Common myeloid progenitor, CD34-positive (primary cell): ENCODE measurements at regions of chr15 and their contacts with region 1.

Region 1: GRCh38 chr15:52256366-52256765 is 39.2 kb downstream of the MYO5C start:
- DNase-seq: peak; percentile 81 to 87 (median 84)
- H3K4me3 ChIP-seq: no peak overlapping the region
- H3K27ac ChIP-seq: no peak overlapping the region
- H3K4me1 ChIP-seq: peaks cover 0 to 11% (median 7%) of the 10 kb centered on the region in 4 experiments
- H3K27me3 ChIP-seq: no peaks in the 10 kb centered on the region

Region 2: GRCh38 chr15:51688863-51689262 is 567.5 kb before region 1 on chr15:
- CTCF ChIA-PET with region 1: no interaction called
- POLR2A ChIA-PET with region 1: no interaction called
- DNase-seq: peak in 2 of 3 donors; percentile 23 to 38
- H3K4me3 ChIP-seq: no peak overlapping the region
- H3K27ac ChIP-seq: no peak overlapping the region
- H3K4me1 ChIP-seq: no peaks in the 10 kb centered on the region
- H3K27me3 ChIP-seq: peaks cover 0 to 13% (median 2%) of the 10 kb centered on the region in 5 experiments

Region 3: DNA sequence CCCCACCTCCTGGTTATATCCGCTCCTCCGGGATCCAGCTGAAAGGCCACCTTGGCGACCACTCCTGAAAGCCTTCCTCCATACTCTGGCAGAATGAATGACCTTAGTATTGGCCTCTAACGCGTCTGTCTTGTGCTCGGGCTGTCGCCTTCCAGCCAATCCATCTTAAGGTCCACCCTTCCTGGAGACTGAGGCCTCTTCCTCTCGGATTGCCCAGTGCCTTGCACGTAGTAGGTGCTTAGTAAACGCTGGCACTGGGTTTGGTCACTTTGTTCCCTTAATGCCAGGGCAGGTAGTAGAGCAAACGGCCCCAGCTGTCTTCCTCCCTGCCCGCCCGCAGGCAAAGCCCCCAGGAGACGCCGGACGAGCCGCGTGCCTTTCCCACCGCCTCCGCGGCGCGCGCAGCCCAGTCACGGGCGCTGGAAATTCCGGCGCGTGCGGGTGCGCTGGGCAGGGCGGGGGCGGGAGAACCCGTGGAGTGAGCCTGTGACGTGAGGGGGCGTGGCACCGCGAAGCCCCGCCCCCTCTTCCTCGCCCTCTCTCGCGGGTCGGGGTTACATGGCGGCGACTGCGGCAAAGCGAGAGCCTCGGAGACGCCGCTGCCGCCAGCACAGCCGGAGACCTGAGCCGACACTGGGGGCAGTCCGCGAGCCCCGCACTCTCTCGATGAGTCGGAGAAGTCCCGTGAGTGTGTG is 237.5 kb before region 1 on chr15 and contains the start of gene MAPK6:
- CTCF ChIA-PET with region 1: no interaction called
- POLR2A ChIA-PET with region 1: no interaction called
- DNase-seq: peak; percentile 93 to 98 (median 96)
- H3K4me3 ChIP-seq: peak within 1 kb of the TSS; percentile 73 to 99 (median 90)
- H3K27ac ChIP-seq: peak within 1 kb of the TSS; percentile 85 to 92
- H3K4me1 ChIP-seq: peaks cover 16 to 47% (median 26%) of the 10 kb centered on the region in 4 experiments
- H3K27me3 ChIP-seq: no peaks in the 10 kb centered on the region

Region 4: GRCh38 chr15:52303093-52303772 is 46.9 kb after region 1 on chr15:
- CTCF ChIA-PET with region 1: interaction called, 11 read pairs
- POLR2A ChIA-PET with region 1: no interaction called
- DNase-seq: no peak
- H3K4me3 ChIP-seq: peak overlapping the region in 1 of 7 experiments; percentile 13
- H3K27ac ChIP-seq: no peak overlapping the region
- H3K4me1 ChIP-seq: peaks cover 0 to 5% (median 0%) of the 10 kb centered on the region in 4 experiments
- H3K27me3 ChIP-seq: no peaks in the 10 kb centered on the region

Region 5: DNA sequence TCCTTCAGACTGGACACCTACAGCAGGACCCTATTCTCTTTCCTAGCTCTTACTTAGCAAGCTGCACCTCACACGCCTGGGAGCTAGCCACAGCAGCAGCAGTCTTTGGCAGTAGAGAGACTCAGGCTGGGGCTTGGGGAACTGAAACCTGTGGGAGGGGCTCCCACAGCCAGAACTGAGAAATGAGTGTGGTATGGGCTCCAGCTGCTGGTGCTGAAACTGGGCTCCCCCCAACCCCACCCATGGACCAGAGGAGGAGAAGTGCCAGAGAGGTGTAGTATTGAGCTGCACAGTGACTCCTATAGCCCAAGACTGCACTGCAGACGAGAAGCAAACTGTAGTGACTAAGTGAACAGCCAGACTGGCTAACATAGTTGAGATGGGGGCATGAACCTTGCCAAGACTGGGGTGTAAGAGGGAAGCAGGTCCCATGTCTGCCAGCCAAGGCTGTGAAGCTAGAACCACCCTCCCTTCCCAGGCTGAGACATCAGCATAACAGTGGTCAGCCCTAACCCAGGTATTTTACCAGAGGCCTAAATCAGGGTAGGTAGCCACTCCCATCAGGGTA is 209.9 kb after region 1 on chr15:
- CTCF ChIA-PET with region 1: interaction called, 19 read pairs
- POLR2A ChIA-PET with region 1: no interaction called
- DNase-seq: peak; percentile 29 to 61 (median 51)
- H3K4me3 ChIP-seq: no peak overlapping the region
- H3K27ac ChIP-seq: no peak overlapping the region
- H3K4me1 ChIP-seq: peaks cover 0 to 19% (median 7%) of the 10 kb centered on the region in 4 experiments
- H3K27me3 ChIP-seq: no peaks in the 10 kb centered on the region

Region 6: GRCh38 chr15:52546031-52546751 is 289.8 kb after region 1 on chr15:
- CTCF ChIA-PET with region 1: no interaction called
- POLR2A ChIA-PET with region 1: no interaction called
- DNase-seq: no peak
- H3K4me3 ChIP-seq: no peak overlapping the region
- H3K27ac ChIP-seq: no peak overlapping the region
- H3K4me1 ChIP-seq: peaks cover 0 to 7% (median 2%) of the 10 kb centered on the region in 4 experiments
- H3K27me3 ChIP-seq: no peaks in the 10 kb centered on the region

Region 7: DNA sequence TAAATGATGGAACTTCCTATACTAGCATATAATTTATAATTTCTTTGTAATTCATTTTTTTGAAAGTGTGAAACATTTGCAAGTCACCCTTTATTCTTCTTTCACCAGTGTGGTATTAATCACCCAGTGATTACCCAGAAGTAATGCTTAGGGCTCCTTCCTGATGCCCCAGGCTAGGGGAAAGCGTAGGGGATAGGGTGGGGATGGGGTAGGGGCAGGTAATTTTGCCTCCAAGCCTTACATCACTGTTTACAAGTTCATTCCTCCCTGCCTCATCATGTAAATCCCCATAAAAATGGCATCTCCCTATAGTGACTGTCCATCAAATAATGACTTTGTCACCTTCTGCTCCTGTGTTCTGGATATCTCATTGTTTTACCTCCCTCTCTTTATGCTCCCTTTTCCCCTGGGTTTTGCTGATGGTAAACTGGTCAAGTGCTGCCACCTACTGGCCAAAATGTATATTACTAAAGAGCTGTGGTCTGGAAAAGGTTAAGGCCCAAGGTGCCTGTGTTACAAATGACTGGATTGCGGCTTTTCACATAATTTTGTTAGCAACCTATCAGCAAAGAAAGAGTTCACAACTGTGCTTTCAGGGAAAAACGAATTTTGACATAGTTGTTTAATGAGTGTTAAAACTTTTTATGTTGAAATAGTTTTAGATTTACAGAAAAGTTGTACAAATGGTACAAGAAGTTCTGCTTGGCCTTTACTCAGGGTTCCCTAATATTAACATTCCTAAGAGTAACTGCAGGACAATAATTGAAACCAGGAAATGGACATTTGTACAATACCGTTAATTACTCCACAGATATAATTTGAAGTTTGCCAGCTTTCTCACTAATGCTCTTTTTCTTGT is 479.1 kb after region 1 on chr15:
- CTCF ChIA-PET with region 1: interaction called, 27 read pairs
- POLR2A ChIA-PET with region 1: interaction called, 3 read pairs
- DNase-seq: peak; percentile 82 to 89 (median 82)
- H3K4me3 ChIP-seq: no peak overlapping the region
- H3K27ac ChIP-seq: no peak overlapping the region
- H3K4me1 ChIP-seq: peaks cover 0 to 10% (median under 1%) of the 10 kb centered on the region in 4 experiments
- H3K27me3 ChIP-seq: no peaks in the 10 kb centered on the region